ENCODE measurements at regions of chr6 and their contacts with region 1.

Region 1: GRCh38 chr6:107567643-107568042 is 77.7 kb downstream of the SOBP start:
- DNase-seq: no peak
- H3K4me3 ChIP-seq: no peak overlapping the region
- H3K27ac ChIP-seq: no peak overlapping the region
- H3K4me1 ChIP-seq: no peaks in the 10 kb centered on the region
- H3K27me3 ChIP-seq: no peaks in the 10 kb centered on the region
- CTCF ChIP-seq: no peak

Region 2: GRCh38 chr6:107534571-107535141 is 33.0 kb before region 1 on chr6:
- CTCF ChIA-PET with region 1: no interaction called
- dilution Hi-C with region 1: no loop called
- in situ Hi-C with region 1: no loop called
- intact Hi-C with region 1: loop called (anchors 2 kb)
- DNase-seq: no peak
- H3K4me3 ChIP-seq: no peak overlapping the region
- H3K27ac ChIP-seq: no peak overlapping the region
- H3K4me1 ChIP-seq: no peaks in the 10 kb centered on the region
- H3K27me3 ChIP-seq: peaks cover 1% of the 10 kb centered on the region
- CTCF ChIP-seq: no peak

Region 3: GRCh38 chr6:107657755-107658461 is 90.3 kb after region 1 on chr6:
- CTCF ChIA-PET with region 1: no interaction called
- dilution Hi-C with region 1: no loop called
- in situ Hi-C with region 1: no loop called
- intact Hi-C with region 1: no loop called
- DNase-seq: no peak
- H3K4me3 ChIP-seq: no peak overlapping the region
- H3K27ac ChIP-seq: no peak overlapping the region
- H3K4me1 ChIP-seq: peaks cover 7% of the 10 kb centered on the region
- H3K27me3 ChIP-seq: no peaks in the 10 kb centered on the region
- CTCF ChIP-seq: no peak